AG04450 (cell line): ENCODE measurements at regions of chr16 and their contacts with region 1.

Region 1: GRCh38 chr16:3029537-3030402 is 5.9 kb downstream of the THOC6 start:
- DNase-seq: no peak
- H3K4me3 ChIP-seq: peak overlapping the region; percentile 17; the same call in 1 of the 2 replicates
- H3K27ac ChIP-seq: no peak overlapping the region
- H3K27me3 ChIP-seq: peaks cover 47% of the 10 kb centered on the region
- CTCF ChIP-seq: no peak

Region 2: GRCh38 chr16:2308089-2308962 is 721.4 kb before region 1 on chr16:
- CTCF ChIA-PET with region 1: no interaction called
- POLR2A ChIA-PET with region 1: no interaction called
- DNase-seq: no peak
- H3K4me3 ChIP-seq: no peak overlapping the region
- H3K27ac ChIP-seq: no peak overlapping the region
- H3K27me3 ChIP-seq: no peaks in the 10 kb centered on the region
- CTCF ChIP-seq: no peak

Region 3: GRCh38 chr16:3046506-3047386 is 17.0 kb after region 1 on chr16 and contains the start of gene MMP25:
- CTCF ChIA-PET with region 1: interaction called, 26 read pairs
- POLR2A ChIA-PET with region 1: no interaction called
- DNase-seq: no peak
- H3K4me3 ChIP-seq: peak within 1 kb of the TSS; percentile 50
- H3K27ac ChIP-seq: no peak within 1 kb of the TSS
- H3K27me3 ChIP-seq: peaks cover 62% of the 10 kb centered on the region
- CTCF ChIP-seq: no peak
- polyA plus RNA-seq, gene MMP25: not detected in 2 replicates

Region 4: GRCh38 chr16:3059000-3059722 is 29.4 kb after region 1 on chr16:
- CTCF ChIA-PET with region 1: interaction called, 14 read pairs
- POLR2A ChIA-PET with region 1: no interaction called
- DNase-seq: peak; percentile 33
- H3K4me3 ChIP-seq: peak overlapping the region; percentile 79
- H3K27ac ChIP-seq: peak overlapping the region; percentile 57
- H3K27me3 ChIP-seq: no peaks in the 10 kb centered on the region
- CTCF ChIP-seq: peak; percentile 61

Region 5: DNA sequence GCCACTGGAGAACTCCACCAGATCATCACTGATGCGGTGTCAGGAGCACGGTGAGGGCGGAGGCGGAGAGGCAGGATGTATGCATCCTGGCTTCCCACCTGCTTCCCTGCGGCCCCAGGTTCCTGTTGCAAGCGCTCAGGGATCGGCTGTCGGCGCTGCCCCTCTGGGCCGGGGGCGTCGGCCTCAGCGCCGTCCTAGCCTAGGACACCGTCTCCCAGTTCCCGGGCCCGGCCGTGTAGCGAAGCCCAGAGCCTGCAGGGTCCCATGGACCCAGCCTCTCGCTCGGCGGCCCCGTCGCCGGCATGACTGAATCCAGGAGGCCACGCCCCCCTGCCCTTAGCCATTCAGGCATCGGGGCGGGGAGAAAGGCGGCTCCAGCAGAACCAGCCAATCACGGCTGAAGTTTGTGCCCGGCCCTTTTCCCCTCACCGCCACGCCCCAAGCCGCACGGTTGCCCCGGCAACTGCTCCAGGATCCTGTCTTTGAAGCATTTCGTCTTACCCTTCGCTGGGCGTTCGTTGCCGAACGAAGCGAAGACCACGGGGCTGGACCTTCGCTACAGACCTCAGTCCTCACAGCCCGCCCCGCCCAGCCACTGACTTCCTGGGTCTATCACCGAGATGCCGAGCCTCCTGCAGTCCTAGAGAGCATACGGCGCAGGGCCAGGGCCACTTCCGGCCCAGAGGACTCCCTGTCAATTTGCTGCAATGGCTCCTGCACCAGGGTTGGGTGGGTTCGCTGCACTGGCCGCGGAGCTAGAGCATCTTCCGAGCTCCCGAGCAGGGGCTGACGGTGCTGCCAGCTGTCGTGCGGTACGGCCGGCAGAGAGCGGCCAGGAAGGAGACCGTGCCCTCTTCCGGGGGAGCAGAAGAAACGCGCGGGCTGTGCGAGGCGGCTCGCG is 94.5 kb after region 1 on chr16:
- CTCF ChIA-PET with region 1: interaction called, 27 read pairs
- POLR2A ChIA-PET with region 1: interaction called, 3 read pairs
- DNase-seq: peak; percentile 74
- H3K4me3 ChIP-seq: peak overlapping the region; percentile 85
- H3K27ac ChIP-seq: peak overlapping the region; percentile 68
- H3K27me3 ChIP-seq: no peaks in the 10 kb centered on the region
- CTCF ChIP-seq: peak; percentile 31

Region 6: DNA sequence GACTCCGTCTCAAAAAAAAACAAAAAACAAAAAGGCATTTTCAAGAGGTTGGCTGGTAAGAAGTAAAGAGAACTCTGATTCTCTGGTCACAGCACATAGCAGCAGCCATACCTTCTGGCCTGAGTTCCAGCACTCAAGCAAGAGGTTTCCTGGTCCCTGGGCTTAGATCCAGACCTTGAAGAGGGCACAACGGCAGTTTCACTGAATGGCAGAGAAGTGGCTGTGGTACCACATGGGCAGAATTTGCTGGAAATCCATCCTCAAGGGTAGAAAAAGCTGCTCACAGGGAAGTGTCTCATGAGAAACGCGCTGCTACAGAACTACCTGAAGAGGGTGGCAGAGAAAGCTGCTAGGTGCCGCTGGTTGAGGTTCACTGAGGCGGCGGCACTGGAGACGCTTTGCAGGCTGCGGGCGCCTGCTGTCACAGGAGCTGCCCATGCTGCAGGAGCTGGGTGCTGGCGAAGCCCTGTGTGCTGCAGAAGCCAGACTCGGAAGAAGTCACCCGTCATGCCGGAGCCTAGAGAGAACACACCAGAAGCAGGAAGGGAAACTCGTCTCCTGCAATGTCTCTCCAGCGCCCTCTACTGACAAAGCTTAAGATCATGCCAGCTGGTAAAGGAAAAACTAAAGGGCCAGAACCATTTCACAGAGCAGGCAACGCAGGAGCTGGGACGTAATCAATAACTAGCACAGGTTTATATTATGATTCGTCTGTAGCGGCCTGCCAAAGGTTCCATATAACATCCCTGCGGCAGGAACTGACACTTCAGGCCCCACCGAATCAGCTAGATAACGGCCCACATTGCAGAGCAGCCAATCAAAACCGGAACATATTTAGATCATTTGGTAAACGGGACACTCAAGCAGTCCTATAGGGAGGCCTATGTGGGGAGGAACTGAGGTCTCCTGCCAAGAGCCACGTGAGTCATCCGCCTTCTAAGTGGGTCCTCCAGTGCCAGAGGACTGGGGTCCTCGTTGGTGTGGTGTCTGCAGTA is 99.7 kb after region 1 on chr16:
- CTCF ChIA-PET with region 1: interaction called, 27 read pairs
- POLR2A ChIA-PET with region 1: interaction called, 3 read pairs
- DNase-seq: peak; percentile 70
- H3K4me3 ChIP-seq: peak overlapping the region; percentile 49
- H3K27ac ChIP-seq: peak overlapping the region; percentile 61
- H3K27me3 ChIP-seq: no peaks in the 10 kb centered on the region
- CTCF ChIP-seq: peak; percentile 95